Gastrocnemius medialis (tissue), 4 donors: ENCODE measurements at regions of chrX and their contacts with region 1.

Region 1: DNA sequence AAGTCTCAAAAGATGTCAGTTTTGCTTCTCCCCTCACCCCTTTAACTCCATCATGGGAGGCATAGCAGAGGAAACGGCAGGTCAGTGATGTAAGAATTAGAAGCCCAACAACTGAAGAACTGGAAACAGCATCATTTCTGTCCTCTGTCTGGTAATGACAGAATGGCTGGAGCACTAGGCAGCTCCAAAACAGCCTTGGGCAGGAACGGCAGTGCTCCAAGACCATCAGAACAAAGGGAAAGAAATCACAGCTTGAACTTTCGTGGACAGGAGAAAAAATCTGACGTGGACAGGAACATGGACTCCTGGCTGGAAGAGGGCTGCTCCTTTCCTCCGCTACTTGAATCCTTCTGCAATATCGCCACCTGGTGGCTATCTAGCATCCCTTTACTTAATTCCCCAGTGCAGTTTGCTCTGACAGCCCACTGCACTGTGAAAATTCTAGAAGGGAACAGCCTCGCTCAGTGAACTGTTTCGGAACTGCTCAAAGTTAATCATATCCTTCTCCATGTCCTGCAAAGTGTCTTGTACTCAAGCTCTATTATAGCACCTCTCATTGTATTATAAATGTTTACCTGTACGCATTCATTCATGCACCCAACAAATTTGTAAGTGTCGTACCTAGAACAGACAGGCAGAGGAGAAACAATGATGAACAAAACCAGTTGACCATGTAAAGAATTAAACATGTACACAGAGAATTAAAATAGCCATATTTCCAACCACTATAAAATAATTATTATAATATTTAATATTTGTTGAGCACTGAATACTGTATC is 20.4 kb downstream of the SLC25A53 start:
- DNase-seq: peak; percentile 39 to 44
- ATAC-seq: peak in 1 of 2 donors; percentile 92
- H3K4me3 ChIP-seq: peak overlapping the region; percentile 34 to 58 (median 41)
- H3K27ac ChIP-seq: no peak overlapping the region
- H3K4me1 ChIP-seq: peaks cover 0 to 6% of the 10 kb centered on the region in 2 donors
- H3K27me3 ChIP-seq: peaks cover 0 to 3% (median 0%) of the 10 kb centered on the region in 3 donors
- CTCF ChIP-seq: peak; percentile 13 to 73 (median 63)
- POLR2A ChIP-seq: no peak

Region 2: DNA sequence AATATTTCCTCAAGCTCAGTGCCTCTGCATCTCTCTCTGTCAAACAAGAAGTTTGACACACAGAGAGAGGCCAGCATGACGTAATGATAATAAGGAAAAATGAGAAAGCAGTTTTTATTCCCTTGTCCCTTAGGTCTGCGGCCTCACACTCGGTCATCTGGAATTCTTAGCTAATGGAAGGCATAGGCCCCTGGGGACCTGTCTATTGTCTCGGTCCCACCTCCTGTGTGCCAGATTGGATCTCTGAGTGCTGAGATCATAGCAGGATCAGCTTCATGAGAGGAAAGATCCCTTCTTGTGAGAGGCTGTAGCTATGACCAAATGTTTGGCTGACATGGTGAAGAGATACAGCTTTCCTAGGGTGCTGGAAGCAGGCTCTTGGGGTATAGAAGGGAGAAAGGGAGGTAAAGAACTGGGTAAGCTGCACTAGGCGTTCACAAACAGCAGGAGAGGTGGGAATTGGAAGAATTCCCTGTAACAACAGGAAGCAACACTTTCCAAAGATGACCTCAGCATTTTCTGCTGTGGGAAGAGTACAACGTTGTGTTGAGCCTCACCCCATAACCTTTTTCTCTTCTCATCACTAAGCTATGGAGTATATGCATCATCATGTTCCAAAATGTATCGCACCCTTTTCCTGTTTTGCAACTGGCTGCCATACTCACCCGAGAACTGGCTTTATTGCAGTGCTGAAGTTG is 405.5 kb before region 1 on chrX:
- in situ Hi-C with region 1: no loop called
- intact Hi-C with region 1: no loop called
- DNase-seq: peak in 1 of 2 donors; percentile 17
- ATAC-seq: peak; percentile 36 to 44
- H3K4me3 ChIP-seq: no peak overlapping the region
- H3K27ac ChIP-seq: peak overlapping the region in 1 of 4 donors; percentile 30
- H3K4me1 ChIP-seq: no peaks in the 10 kb centered on the region
- H3K27me3 ChIP-seq: peaks cover 0 to 4% (median 0%) of the 10 kb centered on the region in 3 donors
- CTCF ChIP-seq: no peak
- POLR2A ChIP-seq: no peak

Region 3: GRCh38 chrX:103845165-103845653 is 291.2 kb before region 1 on chrX:
- in situ Hi-C with region 1: loop called in 3 of 4 experiments (anchors 25 kb)
- intact Hi-C with region 1: loop called (anchors 10 kb)
- DNase-seq: peak in 1 of 2 donors; percentile 30
- ATAC-seq: peak; percentile 58 to 74
- H3K4me3 ChIP-seq: no peak overlapping the region
- H3K27ac ChIP-seq: no peak overlapping the region
- H3K4me1 ChIP-seq: no peaks in the 10 kb centered on the region
- H3K27me3 ChIP-seq: no peaks in the 10 kb centered on the region
- CTCF ChIP-seq: peak in 3 of 5 experiments; percentile 24 to 67 (median 43)
- POLR2A ChIP-seq: no peak

Region 4: DNA sequence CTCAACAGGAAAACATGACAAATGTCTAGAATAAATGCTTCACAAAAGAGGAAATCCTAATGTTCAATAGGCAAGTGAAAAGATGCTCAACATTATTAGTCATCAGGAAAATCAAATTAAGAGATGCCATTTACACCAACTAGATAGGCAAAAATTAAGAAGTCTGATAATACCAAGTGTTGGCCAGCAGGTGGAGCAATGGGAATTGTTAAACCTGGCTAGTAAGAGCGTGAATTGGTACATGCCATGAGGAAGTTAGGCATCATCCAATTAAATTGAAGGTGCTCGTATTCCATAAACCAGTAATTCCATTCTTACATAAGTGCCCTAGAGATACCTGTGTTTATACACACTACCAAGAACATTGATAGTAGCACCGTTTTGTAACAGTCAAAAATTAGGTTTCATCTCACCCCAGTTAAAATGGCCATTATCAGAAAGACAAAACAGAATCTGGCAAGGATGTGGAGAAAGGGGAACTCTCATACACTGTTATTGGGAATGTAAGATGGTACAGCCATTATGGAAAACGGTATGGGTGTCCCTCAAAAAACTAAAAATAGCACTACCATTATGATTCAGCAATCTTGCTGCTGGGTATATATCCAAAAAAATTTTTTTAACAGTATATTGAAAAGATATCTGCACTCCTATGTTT is 38.1 kb before region 1 on chrX:
- in situ Hi-C with region 1: no loop called
- intact Hi-C with region 1: loop called (anchors 1 kb)
- DNase-seq: peak; percentile 4 to 14
- ATAC-seq: peak in 1 of 2 donors; percentile 60
- H3K4me3 ChIP-seq: no peak overlapping the region
- H3K27ac ChIP-seq: no peak overlapping the region
- H3K4me1 ChIP-seq: no peaks in the 10 kb centered on the region
- H3K27me3 ChIP-seq: peaks cover 0 to 7% (median 0%) of the 10 kb centered on the region in 3 donors
- CTCF ChIP-seq: peak; percentile 48 to 70 (median 52)
- POLR2A ChIP-seq: no peak

Region 5: DNA sequence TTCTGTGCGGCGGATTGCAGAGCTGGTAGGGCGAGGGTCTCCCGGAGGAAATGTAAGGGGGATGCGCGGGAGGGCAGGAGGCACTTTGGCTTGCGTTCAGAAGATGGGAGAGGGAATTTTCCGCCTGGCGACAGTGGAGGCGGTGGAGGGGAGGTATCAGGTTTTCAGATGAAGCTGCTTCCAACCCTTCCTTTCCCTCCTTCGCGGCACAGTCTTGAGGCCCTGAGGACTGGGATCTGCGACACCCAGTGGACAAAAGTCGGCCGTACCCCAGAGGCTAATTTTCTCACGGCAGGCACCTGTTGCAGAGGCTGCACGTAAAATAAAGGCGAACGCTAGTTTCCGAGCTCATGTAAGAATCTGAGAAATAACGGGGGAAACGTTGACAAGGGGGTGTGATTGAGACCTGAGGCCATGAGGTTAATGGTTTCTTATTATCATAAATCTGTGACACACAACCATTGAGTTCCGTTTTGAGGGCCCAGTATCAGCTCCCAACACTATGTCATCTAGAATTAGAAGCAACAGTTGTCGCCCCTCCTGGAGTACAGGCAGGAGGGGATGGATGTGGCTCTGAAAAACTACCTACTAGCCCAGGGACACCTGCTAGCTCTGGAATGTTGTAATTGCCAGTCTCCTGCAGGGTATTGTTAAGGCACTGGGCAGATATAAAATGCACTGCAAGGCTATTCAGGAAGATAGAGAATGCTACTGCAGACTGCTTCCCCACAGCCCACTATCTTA is 23.0 kb before region 1 on chrX:
- in situ Hi-C with region 1: no loop called
- intact Hi-C with region 1: loop called (anchors 2 kb)
- DNase-seq: peak; percentile 2 to 21
- ATAC-seq: peak; percentile 75 to 76
- H3K4me3 ChIP-seq: peak overlapping the region; percentile 46 to 68 (median 58)
- H3K27ac ChIP-seq: no peak overlapping the region
- H3K4me1 ChIP-seq: no peaks in the 10 kb centered on the region
- H3K27me3 ChIP-seq: peaks cover 0 to 8% (median 3%) of the 10 kb centered on the region in 3 donors
- CTCF ChIP-seq: peak in 3 of 5 experiments; percentile 31 to 56 (median 43)
- POLR2A ChIP-seq: no peak